Activated CD4-positive, alpha-beta T cell treated with anti-CD3 and anti-CD28 coated beads, Interleukin-2, amount 10 ng/mL, durations not matched to agents 24 days and 14 days (primary cell): ENCODE measurements at regions of chr15 and their contacts with region 1.

Region 1: DNA sequence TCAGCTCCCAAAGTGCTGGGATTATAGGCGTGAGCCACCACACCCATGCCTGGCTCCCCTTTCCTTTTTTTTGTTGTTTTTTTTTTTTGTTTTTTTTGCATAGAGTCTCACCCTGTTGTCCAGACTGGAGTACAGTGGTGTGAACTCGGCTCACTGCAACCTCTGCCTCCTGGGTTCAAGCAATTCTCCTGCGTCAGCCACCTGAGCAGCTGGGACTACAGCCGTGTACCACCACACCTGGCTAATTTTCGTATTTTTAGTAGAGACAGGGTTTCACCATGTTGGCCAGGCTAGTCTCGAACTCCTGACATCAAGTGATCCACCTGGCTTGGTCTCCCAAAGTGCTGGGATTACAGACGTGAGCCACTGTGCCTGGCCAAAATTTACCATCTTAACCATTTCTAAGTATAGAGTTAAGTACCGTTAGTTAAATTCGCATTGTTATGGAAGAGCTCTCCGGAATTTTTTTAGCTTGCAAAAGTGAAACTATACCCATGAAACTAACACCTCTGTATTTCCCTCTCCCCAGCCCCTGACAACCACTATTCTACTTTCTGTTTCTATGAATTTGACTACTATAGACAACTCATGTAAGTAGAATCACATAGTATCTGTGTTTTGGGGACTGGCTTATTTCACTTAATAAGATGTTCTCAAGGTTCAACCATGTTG is 70.9 kb upstream of the C15orf39 start:
- DNase-seq: peak; percentile 82
- H3K4me3 Mint-ChIP-seq: peak overlapping the region; percentile 69
- H3K27ac Mint-ChIP-seq: peak overlapping the region; percentile 75
- H3K4me1 Mint-ChIP-seq: peaks cover 27% of the 10 kb centered on the region
- H3K27me3 Mint-ChIP-seq: peaks cover 3% of the 10 kb centered on the region

Region 2: DNA sequence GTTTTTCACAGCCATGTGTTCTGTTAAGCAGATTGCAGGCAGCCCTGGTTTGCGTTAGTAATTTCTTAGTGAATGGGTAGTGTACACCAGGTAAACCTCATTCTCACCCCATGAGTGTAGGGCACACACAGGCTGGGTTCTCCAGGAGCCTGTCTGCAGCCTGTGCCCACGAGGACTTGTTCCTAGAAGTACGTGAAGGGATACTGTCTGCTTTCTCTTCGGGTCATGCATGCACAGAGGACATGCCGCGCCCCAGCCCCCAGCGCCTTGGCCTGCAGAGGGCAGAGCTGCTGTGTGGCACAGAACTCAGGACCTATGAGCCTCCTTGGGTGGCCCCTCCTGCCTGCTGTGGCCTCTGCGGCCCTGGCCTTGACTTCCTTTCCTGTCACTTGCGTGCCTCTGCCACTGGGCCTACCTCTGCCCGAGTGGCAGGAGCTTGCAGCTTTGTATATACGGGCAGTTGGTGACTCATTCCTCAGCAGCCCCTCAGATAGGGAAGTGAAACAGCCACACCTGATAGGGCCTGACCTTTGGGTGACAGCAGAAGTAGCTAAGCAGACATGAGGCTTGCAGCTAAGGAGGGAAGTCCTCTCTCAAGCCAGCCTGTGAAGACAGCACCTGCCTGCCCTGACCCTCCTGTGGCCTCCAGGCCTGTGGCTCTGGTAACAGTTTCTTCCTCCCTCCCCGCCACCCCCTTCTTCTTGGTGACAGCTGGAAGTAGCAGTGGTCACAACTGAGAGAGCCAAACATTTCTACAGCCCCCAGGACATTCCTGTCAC is 87.8 kb before region 1 on chr15:
- intact Hi-C with region 1: loop called (anchors 5 kb)
- DNase-seq: peak; percentile 92
- H3K4me3 Mint-ChIP-seq: peak overlapping the region; percentile 52
- H3K27ac Mint-ChIP-seq: peak overlapping the region; percentile 81
- H3K4me1 Mint-ChIP-seq: peaks cover 64% of the 10 kb centered on the region
- H3K27me3 Mint-ChIP-seq: no peaks in the 10 kb centered on the region

Region 3: GRCh38 chr15:75067123-75067830 is 63.5 kb before region 1 on chr15:
- intact Hi-C with region 1: loop called (anchors 1 kb)
- DNase-seq: peak; percentile 93
- H3K4me3 Mint-ChIP-seq: peak overlapping the region; percentile 82
- H3K27ac Mint-ChIP-seq: peak overlapping the region; percentile 96
- H3K4me1 Mint-ChIP-seq: peaks cover 64% of the 10 kb centered on the region
- H3K27me3 Mint-ChIP-seq: no peaks in the 10 kb centered on the region

Region 4: GRCh38 chr15:75095594-75095993 is 35.1 kb before region 1 on chr15:
- intact Hi-C with region 1: loop called (anchors 5 kb)
- DNase-seq: no peak
- H3K4me3 Mint-ChIP-seq: no peak overlapping the region
- H3K27ac Mint-ChIP-seq: no peak overlapping the region
- H3K4me1 Mint-ChIP-seq: peaks cover 9% of the 10 kb centered on the region
- H3K27me3 Mint-ChIP-seq: peaks cover 6% of the 10 kb centered on the region

Region 5: GRCh38 chr15:75104804-75105535 is 25.8 kb before region 1 on chr15:
- intact Hi-C with region 1: loop called (anchors 1 kb)
- DNase-seq: peak; percentile 87
- H3K4me3 Mint-ChIP-seq: peak overlapping the region; percentile 47
- H3K27ac Mint-ChIP-seq: peak overlapping the region; percentile 88
- H3K4me1 Mint-ChIP-seq: peaks cover 35% of the 10 kb centered on the region
- H3K27me3 Mint-ChIP-seq: peaks cover 7% of the 10 kb centered on the region

Region 6: DNA sequence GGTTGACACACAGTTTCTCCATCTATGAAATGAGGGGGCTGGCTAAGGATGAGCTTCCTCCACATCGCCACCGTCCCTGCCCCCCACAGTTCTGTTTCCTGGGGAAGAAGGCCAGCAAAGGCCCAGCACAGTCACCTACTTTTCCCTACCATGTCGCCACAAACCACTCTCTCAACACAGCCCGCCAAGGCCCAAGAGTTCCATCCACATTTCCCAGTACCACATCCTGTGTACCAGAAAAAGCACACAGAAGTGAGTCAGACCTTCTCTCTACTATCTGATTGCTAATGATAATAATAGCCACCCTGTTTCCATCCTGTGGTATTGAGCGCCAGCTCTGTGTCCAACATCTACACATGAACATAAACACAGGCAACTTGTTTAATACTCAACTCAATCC is 40.7 kb after region 1 on chr15:
- intact Hi-C with region 1: loop called (anchors 5 kb)
- DNase-seq: peak; percentile 79
- H3K4me3 Mint-ChIP-seq: peak overlapping the region; percentile 41
- H3K27ac Mint-ChIP-seq: peak overlapping the region; percentile 74
- H3K4me1 Mint-ChIP-seq: peaks cover 45% of the 10 kb centered on the region
- H3K27me3 Mint-ChIP-seq: peaks cover 3% of the 10 kb centered on the region